PC-3 (cell line): ENCODE measurements at regions of chr12 and their contacts with region 1.

Region 1: DNA sequence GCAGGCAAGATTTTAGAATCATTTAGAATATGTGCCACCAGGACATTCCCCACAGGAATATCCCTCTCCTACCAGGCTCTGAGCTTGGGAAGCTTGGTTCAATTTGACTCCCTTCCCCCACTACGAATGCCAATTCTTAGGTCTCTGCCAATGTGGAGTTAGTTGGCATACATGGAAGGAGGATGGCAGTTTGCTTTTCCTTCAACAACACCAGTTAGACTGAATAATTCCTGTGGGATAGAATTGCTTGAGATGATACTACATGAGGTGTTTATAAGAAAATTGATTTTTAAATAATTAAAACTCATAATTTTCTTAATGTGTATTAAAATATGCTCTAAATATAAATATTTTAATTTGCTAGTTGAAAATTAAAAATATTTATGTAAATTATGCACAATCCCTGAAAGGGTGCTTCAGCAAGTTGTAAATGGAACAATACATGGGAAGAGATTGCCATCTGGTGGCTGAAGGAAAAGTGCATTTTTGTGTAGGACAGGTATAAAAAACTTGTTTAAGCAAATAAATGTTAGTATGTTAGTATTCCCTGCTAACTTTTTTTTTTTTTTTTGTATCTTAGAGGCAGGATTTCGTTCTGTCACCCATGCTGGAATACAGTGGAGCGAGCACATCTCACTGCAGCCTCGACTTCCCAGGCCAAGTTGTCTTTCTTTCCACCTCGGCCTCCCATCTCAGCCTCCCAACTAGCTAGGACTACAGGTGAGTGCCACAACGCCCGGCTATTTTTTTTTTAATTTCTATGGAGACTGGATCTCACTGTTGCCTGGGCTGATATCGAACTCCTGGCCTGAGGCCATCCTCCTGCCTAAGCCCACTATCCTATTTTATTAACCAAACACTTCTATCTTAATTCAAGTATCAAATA is 25.8 kb upstream of the STRAP start:
- DNase-seq: peak; percentile 81
- ATAC-seq: peak; percentile 54
- H3K4me3 ChIP-seq: peak overlapping the region; percentile 48; the same call in 1 of the 2 replicates
- H3K27ac ChIP-seq: peak overlapping the region; percentile 77
- H3K4me1 ChIP-seq: peaks cover 16% of the 10 kb centered on the region
- H3K27me3 ChIP-seq: no peaks in the 10 kb centered on the region
- CTCF ChIP-seq: peak; percentile 64

Region 2: DNA sequence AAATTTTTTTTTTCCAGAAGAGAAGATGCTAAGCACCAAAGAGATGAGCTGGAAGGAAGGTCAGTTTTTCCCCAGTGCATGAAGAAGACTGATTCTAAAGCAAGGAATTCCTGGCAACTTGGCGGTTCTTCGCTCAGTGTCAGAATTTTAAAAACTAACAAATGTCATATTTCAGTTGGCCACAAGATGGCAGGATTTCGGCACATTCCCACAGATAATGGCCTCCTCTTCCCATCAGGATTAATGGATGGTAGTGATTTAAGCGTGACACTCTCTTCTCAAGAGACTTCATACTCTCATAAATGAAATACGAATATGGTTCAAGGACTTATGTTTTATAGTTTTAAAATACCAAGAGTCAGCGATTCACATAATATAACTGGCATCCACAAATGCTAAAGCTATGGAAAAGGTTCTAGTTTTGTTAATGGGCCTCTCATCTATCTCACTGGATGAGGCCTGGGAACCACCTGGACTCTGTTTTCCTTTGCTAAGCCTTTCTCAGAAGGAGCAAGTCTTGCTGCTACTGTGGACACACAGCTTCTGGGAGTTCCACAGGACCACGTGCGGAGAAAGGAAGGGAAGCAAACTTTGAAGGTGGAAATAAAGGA is 580.1 kb before region 1 on chr12:
- CTCF ChIA-PET with region 1: no interaction called
- POLR2A ChIA-PET with region 1: no interaction called
- intact Hi-C with region 1: loop called (anchors 10 kb)
- DNase-seq: peak; percentile 70
- ATAC-seq: no peak
- H3K4me3 ChIP-seq: no peak overlapping the region
- H3K27ac ChIP-seq: 0 out of 2 replicates have a peak overlapping the region, but pooled peaks have one; percentile 85
- H3K4me1 ChIP-seq: peaks cover 49% of the 10 kb centered on the region
- H3K27me3 ChIP-seq: no peaks in the 10 kb centered on the region
- CTCF ChIP-seq: peak; percentile 71

Region 3: GRCh38 chr12:15532364-15532977 is 323.9 kb before region 1 on chr12:
- CTCF ChIA-PET with region 1: interaction called, 7 read pairs
- POLR2A ChIA-PET with region 1: no interaction called
- intact Hi-C with region 1: loop called (anchors 1 kb)
- DNase-seq: peak; percentile 77
- ATAC-seq: peak; percentile 84
- H3K4me3 ChIP-seq: no peak overlapping the region
- H3K27ac ChIP-seq: no peak overlapping the region
- H3K4me1 ChIP-seq: no peaks in the 10 kb centered on the region
- H3K27me3 ChIP-seq: no peaks in the 10 kb centered on the region
- CTCF ChIP-seq: peak; percentile 77

Region 4: DNA sequence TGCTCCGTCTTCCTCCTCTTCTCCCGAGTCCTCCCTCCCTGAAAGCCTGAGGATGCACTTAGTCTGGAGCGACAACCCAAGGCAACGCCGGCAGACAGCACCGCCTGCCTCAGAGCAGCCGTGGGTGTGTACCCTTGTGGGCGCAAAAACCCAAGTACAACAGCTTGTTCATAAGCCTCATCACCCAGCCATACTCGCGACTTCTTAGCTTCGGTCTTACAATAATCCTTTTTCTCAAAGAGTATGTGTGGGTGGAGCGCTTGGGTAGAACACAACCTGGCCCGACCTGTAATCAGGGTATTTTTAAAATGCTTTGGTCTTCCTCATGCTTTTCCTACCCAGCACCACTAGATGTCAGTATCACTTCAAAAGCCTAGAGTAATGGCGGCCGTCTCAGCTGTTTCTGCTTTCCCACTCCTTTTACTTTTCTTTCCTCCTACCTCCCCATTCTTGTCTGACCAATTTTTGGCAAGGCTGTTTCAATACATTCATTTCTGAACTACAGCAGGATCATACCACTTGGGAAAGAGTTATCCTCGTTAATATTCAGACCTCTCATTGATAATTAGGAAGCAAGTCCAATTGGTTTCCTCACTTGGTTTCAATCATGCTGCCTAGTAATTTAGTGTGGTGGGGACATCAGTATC is 266.0 kb before region 1 on chr12:
- CTCF ChIA-PET with region 1: no interaction called
- POLR2A ChIA-PET with region 1: no interaction called
- intact Hi-C with region 1: loop called (anchors 1 kb)
- DNase-seq: peak; percentile 74
- ATAC-seq: peak; percentile 62
- H3K4me3 ChIP-seq: peak overlapping the region; percentile 67
- H3K27ac ChIP-seq: peak overlapping the region; percentile 75
- H3K4me1 ChIP-seq: peaks cover 30% of the 10 kb centered on the region
- H3K27me3 ChIP-seq: no peaks in the 10 kb centered on the region
- CTCF ChIP-seq: peak; percentile 85

Region 5: GRCh38 chr12:15772405-15773018 is 83.8 kb before region 1 on chr12:
- CTCF ChIA-PET with region 1: no interaction called
- POLR2A ChIA-PET with region 1: no interaction called
- intact Hi-C with region 1: loop called (anchors 5 kb)
- DNase-seq: peak; percentile 32
- ATAC-seq: peak; percentile 29; the same call in 1 of the 2 replicates
- H3K4me3 ChIP-seq: no peak overlapping the region
- H3K27ac ChIP-seq: no peak overlapping the region
- H3K4me1 ChIP-seq: peaks cover 10% of the 10 kb centered on the region; the same call in 1 of the 2 replicates
- H3K27me3 ChIP-seq: no peaks in the 10 kb centered on the region
- CTCF ChIP-seq: peak; percentile 63

Region 6: GRCh38 chr12:15789220-15790171 is 66.8 kb before region 1 on chr12 and contains the start of gene EPS8:
- CTCF ChIA-PET with region 1: no interaction called
- POLR2A ChIA-PET with region 1: no interaction called
- intact Hi-C with region 1: loop called (anchors 5 kb)
- DNase-seq: peak; percentile 88
- ATAC-seq: peak; percentile 78
- H3K4me3 ChIP-seq: peak within 1 kb of the TSS; percentile 85
- H3K27ac ChIP-seq: peak within 1 kb of the TSS; percentile 79
- H3K4me1 ChIP-seq: peaks cover 18% of the 10 kb centered on the region
- H3K27me3 ChIP-seq: no peaks in the 10 kb centered on the region
- CTCF ChIP-seq: no peak
- total RNA-seq, gene EPS8: 37.8 and 47.4 TPM in 2 replicates